ENCODE measurements at regions of chr4 and their contacts with region 1.

Region 1: GRCh38 chr4:71772592-71772991 is 11.3 kb downstream of the GC start:
- DNase-seq: peak in 2 of 4 experiments; percentile 6 to 9
- ATAC-seq: peak; percentile 60; the same call in 1 of the 3 replicates
- H3K4me3 ChIP-seq: no peak overlapping the region
- H3K27ac ChIP-seq: no peak overlapping the region
- H3K4me1 ChIP-seq: no peaks in the 10 kb centered on the region
- H3K27me3 ChIP-seq: no peaks in the 10 kb centered on the region
- CTCF ChIP-seq: peak; percentile 26 to 65 (median 32); a peak in 3 of 6 replicates
- EP300 ChIP-seq: no peak
- POLR2A ChIP-seq: no peak
- RAD21 ChIP-seq: peak; percentile 44 to 67

Region 2: GRCh38 chr4:71346710-71347109 is 425.9 kb before region 1 on chr4:
- CTCF ChIA-PET with region 1: no interaction called
- POLR2A ChIA-PET with region 1: no interaction called
- in situ Hi-C with region 1: no loop called
- intact Hi-C with region 1: no loop called
- DNase-seq: no peak
- ATAC-seq: no peak
- H3K4me3 ChIP-seq: no peak overlapping the region
- H3K27ac ChIP-seq: no peak overlapping the region
- H3K4me1 ChIP-seq: no peaks in the 10 kb centered on the region
- H3K27me3 ChIP-seq: no peaks in the 10 kb centered on the region
- CTCF ChIP-seq: no peak
- EP300 ChIP-seq: no peak
- POLR2A ChIP-seq: no peak
- RAD21 ChIP-seq: no peak

Region 3: GRCh38 chr4:71807469-71807868 is 34.9 kb after region 1 on chr4:
- CTCF ChIA-PET with region 1: no interaction called
- POLR2A ChIA-PET with region 1: no interaction called
- in situ Hi-C with region 1: no loop called
- intact Hi-C with region 1: no loop called
- DNase-seq: peak in 1 of 4 experiments; percentile 11
- ATAC-seq: peak; percentile 84
- H3K4me3 ChIP-seq: no peak overlapping the region
- H3K27ac ChIP-seq: no peak overlapping the region; the same call in 2 of the 3 replicates
- H3K4me1 ChIP-seq: peaks cover 0 to 6% of the 10 kb centered on the region in 2 experiments; a peak in 2 of 5 replicates
- H3K27me3 ChIP-seq: no peaks in the 10 kb centered on the region
- CTCF ChIP-seq: no peak
- EP300 ChIP-seq: peak; percentile 42; the same call in 1 of the 2 replicates
- POLR2A ChIP-seq: no peak
- RAD21 ChIP-seq: no peak

Region 4: DNA sequence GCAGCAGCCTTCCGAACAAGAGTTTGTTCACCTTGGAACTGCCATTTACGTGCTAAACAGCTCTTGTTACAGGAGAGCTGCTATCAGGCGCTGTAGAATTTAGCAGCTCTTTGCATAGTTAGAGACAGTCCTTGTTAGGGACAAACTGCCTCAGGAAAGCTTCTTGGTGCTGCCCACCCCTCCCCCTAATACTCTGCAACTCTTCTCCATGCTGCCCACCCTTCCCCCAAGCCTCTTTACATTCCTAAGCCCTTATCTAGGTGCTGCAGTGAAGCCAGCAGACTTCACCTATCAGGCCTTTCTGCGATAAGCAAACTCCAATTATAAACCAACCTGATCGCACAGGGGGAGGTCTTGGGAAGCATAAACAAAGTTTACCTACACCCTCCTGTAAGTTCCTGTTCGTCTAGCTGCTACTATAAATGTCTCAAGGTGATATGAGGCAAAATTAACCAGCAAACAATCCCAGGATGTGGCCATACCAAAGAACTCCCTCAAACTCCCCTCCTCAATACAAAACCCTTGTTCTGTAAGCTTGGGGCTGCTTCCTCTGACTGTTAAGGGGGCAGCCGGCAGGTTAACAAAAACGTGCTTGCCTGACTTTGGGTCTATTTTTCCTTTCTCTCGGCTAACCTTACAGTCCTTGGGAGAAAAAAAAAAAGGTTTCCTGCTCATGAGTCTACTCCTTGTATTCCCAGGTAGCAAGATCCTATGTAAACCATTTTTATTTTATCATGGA is 85.3 kb after region 1 on chr4:
- CTCF ChIA-PET with region 1: no interaction called
- POLR2A ChIA-PET with region 1: no interaction called
- in situ Hi-C with region 1: no loop called
- intact Hi-C with region 1: loop called (anchors 1 kb)
- DNase-seq: peak; percentile 69 to 95 (median 74)
- ATAC-seq: peak; percentile 94
- H3K4me3 ChIP-seq: peak overlapping the region; percentile 17; the same call in 1 of the 2 replicates
- H3K27ac ChIP-seq: peak overlapping the region; percentile 90
- H3K4me1 ChIP-seq: peaks cover 0 to 24% of the 10 kb centered on the region in 2 experiments; a peak in 2 of 5 replicates
- H3K27me3 ChIP-seq: no peaks in the 10 kb centered on the region
- CTCF ChIP-seq: no peak
- EP300 ChIP-seq: peak; percentile 98
- POLR2A ChIP-seq: peak; percentile 45; the same call in 1 of the 2 replicates
- RAD21 ChIP-seq: peak in 1 of 2 experiments; percentile 30; a peak in 2 of 4 replicates

Region 5: GRCh38 chr4:71941001-71941400 is 168.4 kb after region 1 on chr4:
- CTCF ChIA-PET with region 1: interaction called, 4 read pairs
- POLR2A ChIA-PET with region 1: interaction called, 3 read pairs
- in situ Hi-C with region 1: loop called (anchors 25 kb)
- intact Hi-C with region 1: loop called (anchors 1 kb)
- DNase-seq: peak; percentile 12 to 58 (median 17)
- ATAC-seq: peak; percentile 66
- H3K4me3 ChIP-seq: no peak overlapping the region
- H3K27ac ChIP-seq: no peak overlapping the region
- H3K4me1 ChIP-seq: no peaks in the 10 kb centered on the region
- H3K27me3 ChIP-seq: no peaks in the 10 kb centered on the region
- CTCF ChIP-seq: peak; percentile 43 to 67 (median 52); a peak in 5 of 6 replicates
- EP300 ChIP-seq: no peak
- POLR2A ChIP-seq: no peak
- RAD21 ChIP-seq: peak; percentile 62 to 71

Region 6: DNA sequence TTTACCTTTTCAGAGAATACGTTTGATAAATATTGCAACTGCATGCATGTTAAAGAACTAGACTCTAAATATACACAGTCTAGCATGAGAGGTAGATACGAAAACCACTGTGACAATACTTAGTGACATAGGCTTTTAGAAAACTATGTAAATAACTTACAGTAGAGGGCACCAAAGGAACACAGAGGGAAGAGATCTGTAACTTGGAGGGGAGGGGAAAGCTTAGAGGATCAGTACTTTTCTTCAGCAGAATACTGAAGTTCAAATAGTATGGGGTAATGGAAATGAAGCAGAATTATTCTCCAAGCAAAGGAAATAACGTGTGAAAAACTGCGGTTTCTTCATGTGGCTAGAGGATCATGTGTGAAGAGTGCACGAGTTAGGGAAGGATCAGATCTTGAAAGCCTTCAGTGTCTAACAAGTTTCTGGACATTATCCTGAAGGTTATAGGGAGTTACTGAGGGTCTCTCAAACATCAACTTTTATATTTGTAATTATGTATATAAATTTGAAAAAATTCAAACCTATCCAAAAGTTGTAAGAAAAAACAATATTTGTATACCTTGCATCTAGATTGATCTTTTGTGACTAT is 523.5 kb after region 1 on chr4:
- CTCF ChIA-PET with region 1: no interaction called
- POLR2A ChIA-PET with region 1: no interaction called
- in situ Hi-C with region 1: loop called (anchors 25 kb)
- intact Hi-C with region 1: loop called (anchors 5 kb)
- DNase-seq: peak; percentile 34 to 46 (median 40)
- ATAC-seq: peak; percentile 93
- H3K4me3 ChIP-seq: no peak overlapping the region
- H3K27ac ChIP-seq: no peak overlapping the region
- H3K4me1 ChIP-seq: no peaks in the 10 kb centered on the region
- H3K27me3 ChIP-seq: no peaks in the 10 kb centered on the region
- CTCF ChIP-seq: peak; percentile 42 to 69 (median 55); a peak in 5 of 6 replicates
- EP300 ChIP-seq: no peak
- POLR2A ChIP-seq: no peak
- RAD21 ChIP-seq: peak; percentile 66 to 70

Region 7: DNA sequence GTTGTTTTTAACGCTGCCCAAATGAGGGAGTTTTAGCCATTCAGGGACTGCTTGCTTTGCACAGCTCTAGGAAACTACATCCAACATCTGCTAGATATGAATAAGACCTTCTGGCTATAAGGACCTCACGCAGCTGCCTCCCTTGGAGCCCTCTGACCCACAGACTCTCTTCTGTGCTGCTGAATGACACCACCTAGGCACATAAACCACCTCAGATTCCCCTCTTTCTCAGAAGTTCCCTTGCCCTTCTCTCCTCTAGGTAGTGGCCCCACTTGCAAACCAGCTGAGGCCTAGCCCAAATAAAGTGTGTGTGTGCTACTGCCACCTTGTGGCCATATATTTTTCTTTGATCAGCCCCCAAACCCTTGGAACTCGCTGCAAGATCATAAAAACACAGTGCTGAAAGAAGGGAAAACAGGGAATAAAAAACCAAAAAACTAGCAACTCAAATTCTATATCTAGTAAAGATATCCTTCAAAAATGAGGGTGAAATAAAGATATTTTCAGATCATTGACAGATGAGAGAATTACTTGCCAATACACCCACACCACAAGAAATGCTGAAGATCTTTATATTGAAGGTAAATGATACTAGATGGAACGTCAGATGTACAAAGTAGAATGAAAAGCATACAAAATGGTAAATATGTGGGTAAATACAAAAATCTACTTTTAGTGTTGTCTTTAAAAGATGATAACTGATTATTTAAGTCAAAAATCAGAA is 530.6 kb after region 1 on chr4:
- CTCF ChIA-PET with region 1: no interaction called
- POLR2A ChIA-PET with region 1: no interaction called
- in situ Hi-C with region 1: loop called (anchors 25 kb)
- intact Hi-C with region 1: loop called (anchors 5 kb)
- DNase-seq: peak; percentile 45 to 66 (median 56)
- ATAC-seq: peak; percentile 98
- H3K4me3 ChIP-seq: no peak overlapping the region
- H3K27ac ChIP-seq: no peak overlapping the region
- H3K4me1 ChIP-seq: no peaks in the 10 kb centered on the region
- H3K27me3 ChIP-seq: no peaks in the 10 kb centered on the region
- CTCF ChIP-seq: peak; percentile 61 to 70 (median 63)
- EP300 ChIP-seq: no peak
- POLR2A ChIP-seq: no peak
- RAD21 ChIP-seq: peak; percentile 42 to 48

Measured in K562 (cell line).